K562 (cell line): ENCODE measurements at regions of chr4 and their contacts with region 1.

Region 1: GRCh38 chr4:68074388-68074787 is 55.3 kb downstream of the TMPRSS11F start:
- DNase-seq: no peak
- ATAC-seq: no peak
- H3K4me3 ChIP-seq: no peak overlapping the region
- H3K27ac ChIP-seq: no peak overlapping the region
- H3K4me1 ChIP-seq: no peaks in the 10 kb centered on the region
- H3K27me3 ChIP-seq: no peaks in the 10 kb centered on the region
- CTCF ChIP-seq: no peak
- EP300 ChIP-seq: no peak
- POLR2A ChIP-seq: no peak
- RAD21 ChIP-seq: no peak

Region 2: GRCh38 chr4:67680581-67681222 is 393.7 kb before region 1 on chr4:
- CTCF ChIA-PET with region 1: no interaction called
- POLR2A ChIA-PET with region 1: no interaction called
- in situ Hi-C with region 1: no loop called
- intact Hi-C with region 1: no loop called
- DNase-seq: no peak
- ATAC-seq: peak; percentile 60
- H3K4me3 ChIP-seq: no peak overlapping the region
- H3K27ac ChIP-seq: no peak overlapping the region
- H3K4me1 ChIP-seq: no peaks in the 10 kb centered on the region
- H3K27me3 ChIP-seq: no peaks in the 10 kb centered on the region
- CTCF ChIP-seq: no peak
- EP300 ChIP-seq: no peak
- POLR2A ChIP-seq: no peak
- RAD21 ChIP-seq: no peak

Region 3: DNA sequence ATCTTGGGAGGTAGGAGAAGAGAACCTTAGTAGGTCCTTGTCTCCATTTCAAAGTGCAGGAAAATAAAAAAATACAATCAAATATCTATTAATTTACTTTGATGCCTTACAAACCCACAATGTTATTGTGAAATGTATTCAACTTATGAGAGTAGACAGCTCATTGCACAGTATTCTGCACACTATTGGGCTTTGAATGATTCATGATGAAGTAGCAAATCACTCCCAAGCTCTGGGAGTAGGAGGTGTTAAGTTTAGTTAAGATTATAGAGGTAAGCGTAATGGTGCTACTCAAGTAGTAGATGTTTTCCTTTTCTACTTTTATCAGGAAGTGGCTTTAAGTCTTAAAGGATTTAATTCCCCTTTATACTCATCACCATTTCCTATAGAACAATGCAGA is 78.3 kb before region 1 on chr4:
- CTCF ChIA-PET with region 1: interaction called, 3 read pairs
- POLR2A ChIA-PET with region 1: no interaction called
- in situ Hi-C with region 1: no loop called
- intact Hi-C with region 1: loop called (anchors 10 kb)
- DNase-seq: no peak
- ATAC-seq: no peak
- H3K4me3 ChIP-seq: no peak overlapping the region
- H3K27ac ChIP-seq: no peak overlapping the region
- H3K4me1 ChIP-seq: no peaks in the 10 kb centered on the region
- H3K27me3 ChIP-seq: no peaks in the 10 kb centered on the region
- CTCF ChIP-seq: no peak
- EP300 ChIP-seq: no peak
- POLR2A ChIP-seq: no peak
- RAD21 ChIP-seq: no peak

Region 4: DNA sequence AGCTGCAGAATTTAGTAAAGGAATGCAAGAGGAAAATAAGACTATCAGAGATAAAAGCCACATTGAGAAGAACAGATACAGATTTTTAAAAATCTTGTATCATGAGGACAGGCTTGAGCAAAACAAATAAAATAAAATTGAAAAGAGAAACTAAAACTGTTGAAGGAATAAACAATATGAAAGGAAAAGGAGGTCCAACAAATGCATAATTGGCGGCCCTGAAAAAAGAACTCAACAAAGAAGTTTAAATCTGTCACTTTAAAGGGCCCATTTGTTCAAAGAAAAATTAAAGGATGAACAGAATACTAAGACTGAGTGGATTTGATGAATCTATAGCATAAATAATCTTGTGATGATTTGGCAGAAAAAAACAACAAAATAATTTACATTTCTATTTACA is 134.6 kb after region 1 on chr4:
- CTCF ChIA-PET with region 1: no interaction called
- POLR2A ChIA-PET with region 1: no interaction called
- in situ Hi-C with region 1: no loop called
- intact Hi-C with region 1: no loop called
- DNase-seq: peak in 1 of 4 experiments; percentile 5
- ATAC-seq: no peak
- H3K4me3 ChIP-seq: no peak overlapping the region
- H3K27ac ChIP-seq: no peak overlapping the region
- H3K4me1 ChIP-seq: no peaks in the 10 kb centered on the region
- H3K27me3 ChIP-seq: no peaks in the 10 kb centered on the region
- CTCF ChIP-seq: no peak
- EP300 ChIP-seq: no peak
- POLR2A ChIP-seq: no peak
- RAD21 ChIP-seq: no peak

Region 5: DNA sequence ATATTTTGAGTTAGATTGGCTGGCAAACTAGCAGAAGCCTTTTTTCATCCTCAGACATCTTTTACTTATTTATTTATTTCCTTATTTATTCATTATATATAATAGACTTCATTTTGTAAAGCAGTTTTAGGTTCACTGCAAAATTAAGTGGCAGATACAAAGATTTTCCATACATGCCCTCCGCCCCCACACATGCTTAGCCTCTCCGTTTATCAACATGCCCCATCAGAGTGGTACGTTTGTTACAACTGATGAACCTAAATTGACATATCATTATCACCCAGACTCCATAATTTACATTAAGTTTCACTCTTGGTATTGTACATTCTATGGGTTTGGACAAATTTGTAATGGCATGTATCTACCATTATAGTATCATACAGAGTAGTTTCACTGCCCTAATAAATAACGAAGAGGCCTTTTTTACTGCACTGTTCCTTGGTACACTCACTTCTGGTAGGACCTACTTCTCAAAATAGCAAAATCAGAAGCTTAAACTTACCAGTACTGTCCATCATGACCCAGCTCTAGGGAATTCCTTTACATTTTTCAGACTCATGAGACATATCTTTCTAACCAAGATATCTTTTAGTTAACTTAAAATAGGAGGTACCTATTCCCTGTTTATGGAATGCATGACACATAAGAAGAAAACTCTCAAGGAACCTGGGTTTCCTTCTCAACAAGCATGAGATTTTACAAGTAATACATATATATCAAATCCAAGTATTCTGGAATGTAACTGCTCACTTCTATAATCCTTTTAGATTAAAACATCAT is 176.0 kb after region 1 on chr4:
- CTCF ChIA-PET with region 1: no interaction called
- POLR2A ChIA-PET with region 1: no interaction called
- in situ Hi-C with region 1: no loop called
- intact Hi-C with region 1: loop called (anchors 10 kb)
- DNase-seq: no peak
- ATAC-seq: no peak
- H3K4me3 ChIP-seq: no peak overlapping the region
- H3K27ac ChIP-seq: no peak overlapping the region
- H3K4me1 ChIP-seq: no peaks in the 10 kb centered on the region
- H3K27me3 ChIP-seq: no peaks in the 10 kb centered on the region
- CTCF ChIP-seq: no peak
- EP300 ChIP-seq: no peak
- POLR2A ChIP-seq: no peak
- RAD21 ChIP-seq: no peak